HCT116 (cell line): ENCODE measurements at regions of chr3 and their contacts with region 1.

Region 1: GRCh38 chr3:32154205-32154579 is 47.8 kb downstream of the GPD1L start:
- DNase-seq: no peak
- ATAC-seq: peak; percentile 90
- H3K4me3 ChIP-seq: no peak overlapping the region
- H3K27ac ChIP-seq: no peak overlapping the region
- H3K4me1 ChIP-seq: no peaks in the 10 kb centered on the region
- H3K27me3 ChIP-seq: no peaks in the 10 kb centered on the region
- CTCF ChIP-seq: peak; percentile 35 to 43 (median 39); a peak in 4 of 6 replicates
- POLR2A ChIP-seq: no peak
- RAD21 ChIP-seq: peak; percentile 45

Region 2: DNA sequence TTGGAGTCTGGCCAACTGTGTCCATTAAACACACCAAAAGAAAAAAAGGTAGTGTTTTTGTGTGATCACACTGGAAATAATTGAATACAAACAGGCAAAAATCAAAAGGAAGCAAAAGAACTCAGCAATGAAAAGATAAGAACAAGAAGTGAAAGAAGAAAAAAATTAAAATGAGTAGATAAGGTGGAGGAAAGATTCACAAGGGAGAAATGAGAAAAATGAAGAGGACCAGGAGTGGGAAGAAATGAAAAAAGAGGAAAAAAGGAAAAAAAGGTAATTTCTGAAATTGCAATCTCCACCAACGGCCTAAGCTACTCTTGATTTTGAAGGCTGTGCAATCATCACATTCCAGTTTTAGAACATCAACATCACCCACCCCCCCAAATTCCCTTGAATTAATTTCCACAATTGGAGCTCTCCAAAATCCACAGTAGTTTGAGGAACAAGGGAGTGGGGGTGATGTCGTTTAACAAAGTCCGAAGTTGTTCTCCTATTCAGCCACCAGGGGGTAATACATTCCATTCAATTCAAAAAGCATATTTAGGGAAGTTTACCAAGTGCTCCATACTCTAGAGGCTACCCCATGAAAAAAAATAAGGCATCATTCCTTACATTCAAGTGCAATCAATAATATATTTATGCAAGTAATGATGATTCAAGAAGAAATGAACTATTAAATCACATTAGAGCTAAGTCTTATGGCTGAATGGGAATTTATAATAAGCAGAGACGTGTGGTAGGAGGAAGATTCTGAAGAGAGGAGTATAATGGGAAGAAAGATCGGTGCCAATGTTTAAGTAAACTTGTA is 135.2 kb before region 1 on chr3:
- CTCF ChIA-PET with region 1: interaction called, 14 read pairs
- POLR2A ChIA-PET with region 1: no interaction called
- RAD21 ChIA-PET with region 1: no interaction called
- intact Hi-C with region 1: loop called (anchors 1 kb)
- DNase-seq: peak; percentile 54
- ATAC-seq: peak; percentile 94
- H3K4me3 ChIP-seq: no peak overlapping the region
- H3K27ac ChIP-seq: no peak overlapping the region
- H3K4me1 ChIP-seq: no peaks in the 10 kb centered on the region
- H3K27me3 ChIP-seq: no peaks in the 10 kb centered on the region
- CTCF ChIP-seq: peak; percentile 66 to 86 (median 79)
- POLR2A ChIP-seq: no peak
- RAD21 ChIP-seq: peak; percentile 86